Activated B cell treated with CpG ODN at 0.5 μM for 24 hours (primary cell): ENCODE measurements at regions of chr14 and their contacts with region 1.

Region 1: GRCh38 chr14:20613094-20614037 is 22.2 kb upstream of the RNASE12 start:
- DNase-seq: peak; percentile 62
- ATAC-seq: peak; percentile 72
- H3K4me3 Mint-ChIP-seq: no peak overlapping the region
- H3K27ac Mint-ChIP-seq: no peak overlapping the region
- H3K4me1 Mint-ChIP-seq: peaks cover 12% of the 10 kb centered on the region
- H3K27me3 Mint-ChIP-seq: no peaks in the 10 kb centered on the region
- CTCF ChIP-seq: no peak

Region 2: GRCh38 chr14:20454516-20455354 is 158.6 kb before region 1 on chr14 and contains the starts of genes APEX1 and OSGEP:
- CTCF ChIA-PET with region 1: interaction called, 5 read pairs
- POLR2A ChIA-PET with region 1: interaction called, 8 read pairs
- intact Hi-C with region 1: loop called (anchors 1 kb)
- DNase-seq: peak; percentile 88
- ATAC-seq: peak; percentile 88
- H3K4me3 Mint-ChIP-seq: peak within 1 kb of the TSS; percentile 56
- H3K27ac Mint-ChIP-seq: no peak within 1 kb of the TSS
- H3K4me1 Mint-ChIP-seq: peaks cover 35% of the 10 kb centered on the region
- H3K27me3 Mint-ChIP-seq: no peaks in the 10 kb centered on the region
- CTCF ChIP-seq: no peak
- total RNA-seq, gene APEX1: 215 and 231 TPM in 2 replicates
- total RNA-seq, gene OSGEP: 98.3 and 112 TPM in 2 replicates

Region 3: GRCh38 chr14:20503898-20504297 is 109.5 kb before region 1 on chr14:
- CTCF ChIA-PET with region 1: no interaction called
- POLR2A ChIA-PET with region 1: no interaction called
- intact Hi-C with region 1: loop called (anchors 1 kb)
- DNase-seq: no peak
- ATAC-seq: peak; percentile 37
- H3K4me3 Mint-ChIP-seq: peak overlapping the region; percentile 39
- H3K27ac Mint-ChIP-seq: peak overlapping the region; percentile 37
- H3K4me1 Mint-ChIP-seq: peaks cover 27% of the 10 kb centered on the region
- H3K27me3 Mint-ChIP-seq: peaks cover 2% of the 10 kb centered on the region
- CTCF ChIP-seq: no peak

Region 4: DNA sequence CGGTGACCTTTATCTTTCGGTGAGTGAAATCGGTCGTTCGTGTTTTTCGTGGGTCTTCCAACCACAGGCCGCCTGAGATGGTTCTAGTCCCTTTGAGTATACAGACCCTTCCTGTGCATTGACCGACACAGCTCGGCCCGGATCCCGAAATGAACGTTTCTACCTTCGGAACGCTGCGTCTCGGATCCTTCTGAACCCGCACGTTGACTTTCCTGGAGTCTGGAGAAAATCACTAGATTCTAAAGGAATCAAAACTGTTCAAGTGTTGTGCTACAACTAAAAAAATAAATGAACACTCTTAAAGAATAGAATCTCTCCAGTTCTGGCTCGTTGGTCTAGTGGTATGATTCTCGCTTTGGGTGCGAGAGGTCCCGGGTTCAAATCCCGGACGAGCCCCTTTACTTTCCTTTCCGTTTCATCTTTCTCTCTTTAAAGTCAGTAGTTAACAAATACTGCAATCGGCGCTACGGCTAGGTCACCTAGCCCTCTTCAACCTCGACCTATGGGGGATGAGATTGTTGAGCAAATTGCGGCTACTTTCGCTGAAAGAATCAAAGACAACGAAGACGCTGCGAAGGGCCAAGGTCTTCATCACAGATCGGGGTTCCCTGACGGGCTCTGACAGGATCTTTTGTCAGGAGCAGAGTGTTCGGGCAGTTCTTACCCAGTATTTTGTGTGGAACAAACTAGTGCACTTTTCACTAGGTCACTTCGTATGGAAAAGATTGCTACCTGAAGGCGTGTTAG is 19.5 kb after region 1 on chr14:
- CTCF ChIA-PET with region 1: interaction called, 43 read pairs
- POLR2A ChIA-PET with region 1: interaction called, 15 read pairs
- intact Hi-C with region 1: loop called (anchors 1 kb)
- DNase-seq: no peak
- ATAC-seq: peak; percentile 72
- H3K4me3 Mint-ChIP-seq: peak overlapping the region; percentile 82
- H3K27ac Mint-ChIP-seq: peak overlapping the region; percentile 89
- H3K4me1 Mint-ChIP-seq: peaks cover 50% of the 10 kb centered on the region
- H3K27me3 Mint-ChIP-seq: peaks cover 30% of the 10 kb centered on the region
- CTCF ChIP-seq: no peak

Region 5: GRCh38 chr14:20690848-20691523 is 77.6 kb after region 1 on chr14:
- CTCF ChIA-PET with region 1: interaction called, 29 read pairs
- POLR2A ChIA-PET with region 1: interaction called, 76 read pairs
- intact Hi-C with region 1: loop called (anchors 1 kb)
- DNase-seq: no peak
- ATAC-seq: peak; percentile 96
- H3K4me3 Mint-ChIP-seq: no peak overlapping the region
- H3K27ac Mint-ChIP-seq: no peak overlapping the region
- H3K4me1 Mint-ChIP-seq: peaks cover 5% of the 10 kb centered on the region
- H3K27me3 Mint-ChIP-seq: no peaks in the 10 kb centered on the region
- CTCF ChIP-seq: peak; percentile 89